ENCODE measurements at regions of chr14 and their contacts with region 1.

Region 1: GRCh38 chr14:71331403-71331802 is 424.1 kb downstream of the PCNX1 start:
- DNase-seq: no peak
- H3K4me3 Mint-ChIP-seq: peak overlapping the region; percentile 42
- H3K27ac Mint-ChIP-seq: peak overlapping the region; percentile 89
- H3K4me1 Mint-ChIP-seq: peaks cover 71% of the 10 kb centered on the region
- H3K27me3 Mint-ChIP-seq: no peaks in the 10 kb centered on the region

Region 2: GRCh38 chr14:70919774-70920173 is 411.6 kb before region 1 on chr14:
- intact Hi-C with region 1: no loop called
- DNase-seq: no peak
- H3K4me3 Mint-ChIP-seq: no peak overlapping the region
- H3K27ac Mint-ChIP-seq: no peak overlapping the region
- H3K4me1 Mint-ChIP-seq: peaks cover 77% of the 10 kb centered on the region
- H3K27me3 Mint-ChIP-seq: no peaks in the 10 kb centered on the region

Region 3: GRCh38 chr14:71138448-71139293 is 192.7 kb before region 1 on chr14:
- intact Hi-C with region 1: loop called (anchors 1 kb)
- DNase-seq: peak; percentile 34
- H3K4me3 Mint-ChIP-seq: no peak overlapping the region
- H3K27ac Mint-ChIP-seq: peak overlapping the region; percentile 21
- H3K4me1 Mint-ChIP-seq: peaks cover 40% of the 10 kb centered on the region
- H3K27me3 Mint-ChIP-seq: peaks cover 2% of the 10 kb centered on the region

Region 4: DNA sequence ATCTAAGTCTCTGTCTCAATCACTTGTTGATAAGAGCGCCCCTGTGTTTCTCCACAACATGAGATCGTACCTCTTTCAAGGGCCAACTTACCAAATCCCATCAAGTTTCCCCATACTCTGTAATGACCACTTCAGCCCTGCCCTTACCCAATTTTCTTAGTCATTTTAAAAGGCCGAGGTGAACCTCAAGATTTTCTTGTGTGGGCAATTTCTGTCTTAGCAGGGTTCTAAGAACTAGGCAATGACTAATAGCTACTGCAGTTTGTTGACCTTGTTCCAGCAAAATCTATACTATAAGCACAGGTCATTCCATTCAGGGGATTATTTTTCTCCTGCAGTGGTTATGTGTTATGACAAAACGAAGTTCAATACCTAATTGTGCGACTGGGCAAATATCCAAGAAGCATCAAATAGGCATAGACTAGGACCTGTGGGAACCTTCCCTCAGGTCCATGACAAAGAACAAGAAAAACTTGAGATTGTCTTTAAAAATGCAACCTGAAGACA is 64.3 kb before region 1 on chr14:
- intact Hi-C with region 1: loop called (anchors 1 kb)
- DNase-seq: no peak
- H3K4me3 Mint-ChIP-seq: peak overlapping the region; percentile 60
- H3K27ac Mint-ChIP-seq: peak overlapping the region; percentile 80
- H3K4me1 Mint-ChIP-seq: peaks cover 52% of the 10 kb centered on the region
- H3K27me3 Mint-ChIP-seq: no peaks in the 10 kb centered on the region

Region 5: DNA sequence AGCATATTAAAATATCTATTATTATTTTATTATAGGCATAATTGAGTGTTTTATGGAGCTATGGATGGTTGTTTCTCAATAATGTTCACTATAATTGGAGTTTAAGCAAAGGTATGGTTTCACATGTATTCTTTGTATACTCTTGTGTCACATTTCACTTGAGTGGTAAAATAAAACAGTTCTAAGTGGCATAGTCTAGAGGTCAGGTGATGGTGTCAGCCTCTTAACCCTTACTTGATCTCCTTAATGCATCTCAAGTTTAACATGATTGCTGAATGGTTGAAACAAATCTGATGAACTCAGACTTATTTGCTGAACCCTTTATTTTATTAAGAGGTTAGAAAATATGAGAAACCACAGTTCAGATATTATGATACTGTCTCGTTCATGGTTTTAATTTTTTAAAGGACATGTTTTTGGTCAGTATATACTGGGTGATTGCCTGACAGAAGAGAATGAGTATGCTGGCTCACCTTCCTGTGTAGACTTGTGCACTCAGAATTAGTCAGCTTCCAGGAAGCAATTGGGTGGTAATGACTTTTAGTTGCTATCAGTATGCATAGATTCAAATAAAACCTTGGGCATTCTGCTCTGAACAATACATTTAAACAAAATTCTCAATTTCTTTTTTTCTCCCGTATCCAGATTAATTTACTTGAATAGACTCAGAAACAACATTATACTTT is 40.5 kb after region 1 on chr14:
- intact Hi-C with region 1: loop called (anchors 2 kb)
- DNase-seq: no peak
- H3K4me3 Mint-ChIP-seq: no peak overlapping the region
- H3K27ac Mint-ChIP-seq: peak overlapping the region; percentile 1
- H3K4me1 Mint-ChIP-seq: peaks cover 23% of the 10 kb centered on the region
- H3K27me3 Mint-ChIP-seq: no peaks in the 10 kb centered on the region

Region 6: GRCh38 chr14:71410578-71411284 is 79.3 kb after region 1 on chr14:
- intact Hi-C with region 1: loop called (anchors 1 kb)
- DNase-seq: no peak
- H3K4me3 Mint-ChIP-seq: no peak overlapping the region
- H3K27ac Mint-ChIP-seq: peak overlapping the region; percentile 84
- H3K4me1 Mint-ChIP-seq: peaks cover 62% of the 10 kb centered on the region
- H3K27me3 Mint-ChIP-seq: no peaks in the 10 kb centered on the region

Region 7: GRCh38 chr14:71497645-71498086 is 166.3 kb after region 1 on chr14:
- intact Hi-C with region 1: loop called (anchors 2 kb)
- DNase-seq: peak; percentile 5
- H3K4me3 Mint-ChIP-seq: no peak overlapping the region
- H3K27ac Mint-ChIP-seq: no peak overlapping the region
- H3K4me1 Mint-ChIP-seq: peaks cover 15% of the 10 kb centered on the region
- H3K27me3 Mint-ChIP-seq: no peaks in the 10 kb centered on the region

Region 8: GRCh38 chr14:71967704-71968103 is 636.3 kb after region 1 on chr14:
- intact Hi-C with region 1: loop called (anchors 2 kb)
- DNase-seq: no peak
- H3K4me3 Mint-ChIP-seq: peak overlapping the region; percentile 34
- H3K27ac Mint-ChIP-seq: peak overlapping the region; percentile 75
- H3K4me1 Mint-ChIP-seq: peaks cover 8% of the 10 kb centered on the region
- H3K27me3 Mint-ChIP-seq: no peaks in the 10 kb centered on the region

Measured in activated T-helper 1 cell treated with anti-CD3 and anti-CD28 coated beads, Interleukin-12 subunit alpha, Interleukin-12 subunit beta, Interleukin-2, Interleukin-4 antibody, amounts not matched to agents 30 ng/mL and 10 ng/mL and 1 ng/mL, durations not matched to agents 14 hours and 24 hours and 36 hours (primary cell).